B cell (primary cell): ENCODE measurements at regions of chrX and their contacts with region 1.

Region 1: DNA sequence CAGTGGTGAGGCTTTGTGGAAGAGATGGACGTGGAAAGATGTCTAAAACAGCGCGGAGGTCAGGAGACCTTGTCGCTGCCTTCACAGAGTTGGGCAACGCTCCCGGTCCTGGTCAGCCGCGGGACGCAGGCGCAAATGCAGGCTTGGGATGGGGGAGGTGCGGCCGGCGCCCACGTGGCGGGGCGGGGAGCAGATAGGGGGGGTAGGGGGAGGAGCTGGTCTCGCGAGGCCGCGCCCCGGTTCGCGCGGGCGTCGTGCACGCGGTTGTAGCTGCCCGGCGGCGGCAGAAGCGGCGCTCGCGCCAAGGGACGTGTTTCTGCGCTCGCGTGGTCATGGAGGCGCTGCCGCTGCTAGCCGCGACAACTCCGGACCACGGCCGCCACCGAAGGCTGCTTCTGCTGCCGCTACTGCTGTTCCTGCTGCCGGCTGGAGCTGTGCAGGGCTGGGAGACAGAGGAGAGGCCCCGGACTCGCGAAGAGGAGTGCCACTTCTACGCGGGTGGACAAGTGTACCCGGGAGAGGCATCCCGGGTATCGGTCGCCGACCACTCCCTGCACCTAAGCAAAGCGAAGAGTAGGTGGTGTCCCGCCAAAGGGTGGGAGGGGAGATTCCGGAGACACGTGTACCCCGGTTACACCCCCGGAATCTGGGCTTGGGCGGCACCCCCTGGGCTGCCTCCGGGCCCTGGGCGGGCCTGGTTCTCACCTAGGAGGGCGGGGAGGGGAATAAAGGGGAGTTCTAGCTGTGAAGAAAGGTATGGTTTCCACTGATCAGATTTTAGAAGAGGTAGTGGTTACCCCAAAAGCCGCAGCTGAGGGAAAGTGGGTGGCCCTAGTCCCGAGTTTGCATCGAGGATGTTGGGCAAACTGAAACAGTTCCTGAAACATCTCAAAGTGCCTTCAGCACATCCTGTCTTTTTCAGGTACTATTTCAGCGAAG is at the start of gene PRDX4:
- DNase-seq: peak; percentile 83
- ATAC-seq: peak; percentile 91
- H3K4me3 ChIP-seq: peak within 1 kb of the TSS; percentile 21 to 66 (median 64)
- H3K4me3 Mint-ChIP-seq: peak within 1 kb of the TSS; percentile 91
- H3K27ac ChIP-seq: peak within 1 kb of the TSS; percentile 77 to 82
- H3K27ac Mint-ChIP-seq: peak within 1 kb of the TSS; percentile 94
- H3K4me1 ChIP-seq: peaks cover 7 to 15% of the 10 kb centered on the region in 2 donors
- H3K4me1 Mint-ChIP-seq: peaks cover 20% of the 10 kb centered on the region
- H3K27me3 ChIP-seq: no peaks in the 10 kb centered on the region
- H3K27me3 Mint-ChIP-seq: no peaks in the 10 kb centered on the region
- CTCF ChIP-seq: no peak
- total RNA-seq, gene PRDX4: 10.6 and 12.8 TPM in 2 replicates

Region 2: DNA sequence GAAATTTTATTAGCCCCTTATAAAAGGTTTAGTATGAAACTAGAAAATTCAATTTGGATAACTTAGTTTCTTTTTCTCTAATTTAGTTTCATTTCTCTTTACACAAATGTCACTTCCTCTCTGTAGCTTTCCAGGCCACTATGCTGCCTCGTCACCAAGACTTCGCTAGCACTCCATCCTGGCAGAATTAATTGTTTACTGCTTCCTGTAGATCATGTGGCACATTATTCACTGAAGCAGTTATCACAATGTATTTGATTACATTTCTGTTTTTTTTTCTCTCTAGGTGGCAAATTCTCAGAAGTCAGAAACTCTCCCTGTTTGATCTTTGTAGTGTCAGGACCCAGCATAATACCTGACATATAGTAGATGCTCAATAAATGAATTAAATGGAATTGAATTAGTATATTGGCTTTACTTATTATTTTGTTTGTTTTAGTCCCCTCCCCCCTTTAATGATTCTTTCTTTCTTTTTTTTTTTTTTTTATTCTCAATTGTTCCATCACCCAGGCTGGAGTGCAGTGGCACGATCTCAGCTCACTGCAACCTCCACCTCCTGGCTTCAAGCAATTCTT is 106.2 kb after region 1 on chrX:
- CTCF ChIA-PET with region 1: no interaction called
- POLR2A ChIA-PET with region 1: no interaction called
- intact Hi-C with region 1: loop called (anchors 1 kb)
- DNase-seq: peak; percentile 83
- ATAC-seq: peak; percentile 92
- H3K4me3 ChIP-seq: peak overlapping the region in 1 of 5 experiments; percentile 33
- H3K4me3 Mint-ChIP-seq: peak overlapping the region; percentile 71
- H3K27ac ChIP-seq: peak overlapping the region; percentile 85 to 89
- H3K27ac Mint-ChIP-seq: peak overlapping the region; percentile 89
- H3K4me1 ChIP-seq: peaks cover 16 to 27% of the 10 kb centered on the region in 2 donors
- H3K4me1 Mint-ChIP-seq: peaks cover 16% of the 10 kb centered on the region
- H3K27me3 ChIP-seq: no peaks in the 10 kb centered on the region
- H3K27me3 Mint-ChIP-seq: no peaks in the 10 kb centered on the region
- CTCF ChIP-seq: no peak

Region 3: GRCh38 chrX:24024819-24025740 is 357.6 kb after region 1 on chrX:
- CTCF ChIA-PET with region 1: interaction called, 4 read pairs
- POLR2A ChIA-PET with region 1: no interaction called
- intact Hi-C with region 1: loop called (anchors 1 kb)
- DNase-seq: peak; percentile 88
- ATAC-seq: peak; percentile 89
- H3K4me3 ChIP-seq: peak overlapping the region; percentile 54 to 81 (median 79)
- H3K4me3 Mint-ChIP-seq: peak overlapping the region; percentile 85
- H3K27ac ChIP-seq: peak overlapping the region; percentile 77 to 93
- H3K27ac Mint-ChIP-seq: peak overlapping the region; percentile 82
- H3K4me1 ChIP-seq: peaks cover 4 to 10% of the 10 kb centered on the region in 2 donors
- H3K4me1 Mint-ChIP-seq: peaks cover 36% of the 10 kb centered on the region
- H3K27me3 ChIP-seq: no peaks in the 10 kb centered on the region
- H3K27me3 Mint-ChIP-seq: no peaks in the 10 kb centered on the region
- CTCF ChIP-seq: no peak

Region 4: GRCh38 chrX:24054182-24055042 is 386.9 kb after region 1 on chrX and contains the start of gene EIF2S3:
- CTCF ChIA-PET with region 1: interaction called, 7 read pairs
- POLR2A ChIA-PET with region 1: no interaction called
- intact Hi-C with region 1: loop called (anchors 1 kb)
- DNase-seq: peak; percentile 95
- ATAC-seq: peak; percentile 80
- H3K4me3 ChIP-seq: peak within 1 kb of the TSS; percentile 76 to 98 (median 89)
- H3K4me3 Mint-ChIP-seq: peak within 1 kb of the TSS; percentile 99
- H3K27ac ChIP-seq: no peak within 1 kb of the TSS
- H3K27ac Mint-ChIP-seq: peak within 1 kb of the TSS; percentile 100
- H3K4me1 ChIP-seq: no peaks in the 10 kb centered on the region
- H3K4me1 Mint-ChIP-seq: peaks cover 3% of the 10 kb centered on the region
- H3K27me3 ChIP-seq: no peaks in the 10 kb centered on the region
- H3K27me3 Mint-ChIP-seq: no peaks in the 10 kb centered on the region
- CTCF ChIP-seq: peak; percentile 71
- total RNA-seq, gene EIF2S3: 260 and 272 TPM in 2 replicates

Region 5: DNA sequence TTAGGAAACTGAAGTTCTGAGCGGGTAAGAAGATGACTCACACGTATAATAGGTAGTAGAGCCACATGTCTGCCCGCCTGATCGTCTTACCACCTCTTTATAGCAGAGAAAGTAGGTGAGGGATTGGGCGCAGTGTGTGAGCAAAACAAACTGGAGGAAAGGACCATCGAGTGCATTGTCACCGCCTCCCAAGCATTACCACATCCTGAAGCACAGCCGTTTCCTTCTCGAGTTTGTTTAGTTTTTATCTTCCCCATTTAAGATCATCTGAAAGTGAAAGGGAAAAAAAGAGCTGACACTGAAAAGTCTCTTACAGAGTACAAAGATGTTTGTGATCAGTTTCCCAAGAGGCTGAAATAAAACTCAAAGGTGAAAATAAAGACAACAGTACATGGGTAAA is 812.4 kb after region 1 on chrX:
- CTCF ChIA-PET with region 1: no interaction called
- POLR2A ChIA-PET with region 1: no interaction called
- intact Hi-C with region 1: loop called (anchors 5 kb)
- DNase-seq: peak; percentile 89
- ATAC-seq: peak; percentile 96
- H3K4me3 ChIP-seq: peak overlapping the region; percentile 31 to 62 (median 42)
- H3K4me3 Mint-ChIP-seq: peak overlapping the region; percentile 92
- H3K27ac ChIP-seq: peak overlapping the region; percentile 93 to 96
- H3K27ac Mint-ChIP-seq: peak overlapping the region; percentile 99
- H3K4me1 ChIP-seq: peaks cover 33 to 49% of the 10 kb centered on the region in 2 donors
- H3K4me1 Mint-ChIP-seq: peaks cover 62% of the 10 kb centered on the region
- H3K27me3 ChIP-seq: no peaks in the 10 kb centered on the region
- H3K27me3 Mint-ChIP-seq: no peaks in the 10 kb centered on the region
- CTCF ChIP-seq: no peak